Natural killer cell (primary cell): ENCODE measurements at regions of chr19 and their contacts with region 1.

Region 1: GRCh38 chr19:42450314-42450934 is 7.7 kb upstream of the CXCL17 start:
- DNase-seq: peak; percentile 65 to 97
- ATAC-seq: peak; percentile 95 to 98 (median 97)
- H3K4me3 ChIP-seq: no peak overlapping the region
- H3K4me3 Mint-ChIP-seq: no peak overlapping the region
- H3K27ac ChIP-seq: peak overlapping the region; percentile 82
- H3K27ac Mint-ChIP-seq: no peak overlapping the region
- H3K4me1 ChIP-seq: peaks cover 12% of the 10 kb centered on the region
- H3K4me1 Mint-ChIP-seq: peaks cover 5 to 6% of the 10 kb centered on the region in 2 donors
- H3K27me3 ChIP-seq: no peaks in the 10 kb centered on the region
- H3K27me3 Mint-ChIP-seq: peaks cover 6 to 10% of the 10 kb centered on the region in 2 donors
- CTCF ChIP-seq: peak; percentile 83

Region 2: GRCh38 chr19:42465827-42466280 is 15.4 kb after region 1 on chr19:
- intact Hi-C with region 1: no loop called
- DNase-seq: no peak
- ATAC-seq: no peak
- H3K4me3 ChIP-seq: no peak overlapping the region
- H3K4me3 Mint-ChIP-seq: no peak overlapping the region
- H3K27ac ChIP-seq: peak overlapping the region; percentile 8
- H3K27ac Mint-ChIP-seq: no peak overlapping the region
- H3K4me1 ChIP-seq: peaks cover 19% of the 10 kb centered on the region
- H3K4me1 Mint-ChIP-seq: peaks cover 0 to 10% of the 10 kb centered on the region in 2 donors
- H3K27me3 ChIP-seq: no peaks in the 10 kb centered on the region
- H3K27me3 Mint-ChIP-seq: peaks cover 0 to 4% of the 10 kb centered on the region in 2 donors
- CTCF ChIP-seq: no peak

Region 3: GRCh38 chr19:42529248-42529764 is 78.9 kb after region 1 on chr19:
- intact Hi-C with region 1: loop called (anchors 1 kb)
- DNase-seq: peak; percentile 56 to 85
- ATAC-seq: peak; percentile 78 to 95 (median 94)
- H3K4me3 ChIP-seq: no peak overlapping the region
- H3K4me3 Mint-ChIP-seq: no peak overlapping the region
- H3K27ac ChIP-seq: no peak overlapping the region
- H3K27ac Mint-ChIP-seq: peak overlapping the region in 1 of 2 donors; percentile 78
- H3K4me1 ChIP-seq: peaks cover 14% of the 10 kb centered on the region
- H3K4me1 Mint-ChIP-seq: peaks cover 6 to 17% of the 10 kb centered on the region in 2 donors
- H3K27me3 ChIP-seq: no peaks in the 10 kb centered on the region
- H3K27me3 Mint-ChIP-seq: no peaks in the 10 kb centered on the region
- CTCF ChIP-seq: peak; percentile 86

Region 4: DNA sequence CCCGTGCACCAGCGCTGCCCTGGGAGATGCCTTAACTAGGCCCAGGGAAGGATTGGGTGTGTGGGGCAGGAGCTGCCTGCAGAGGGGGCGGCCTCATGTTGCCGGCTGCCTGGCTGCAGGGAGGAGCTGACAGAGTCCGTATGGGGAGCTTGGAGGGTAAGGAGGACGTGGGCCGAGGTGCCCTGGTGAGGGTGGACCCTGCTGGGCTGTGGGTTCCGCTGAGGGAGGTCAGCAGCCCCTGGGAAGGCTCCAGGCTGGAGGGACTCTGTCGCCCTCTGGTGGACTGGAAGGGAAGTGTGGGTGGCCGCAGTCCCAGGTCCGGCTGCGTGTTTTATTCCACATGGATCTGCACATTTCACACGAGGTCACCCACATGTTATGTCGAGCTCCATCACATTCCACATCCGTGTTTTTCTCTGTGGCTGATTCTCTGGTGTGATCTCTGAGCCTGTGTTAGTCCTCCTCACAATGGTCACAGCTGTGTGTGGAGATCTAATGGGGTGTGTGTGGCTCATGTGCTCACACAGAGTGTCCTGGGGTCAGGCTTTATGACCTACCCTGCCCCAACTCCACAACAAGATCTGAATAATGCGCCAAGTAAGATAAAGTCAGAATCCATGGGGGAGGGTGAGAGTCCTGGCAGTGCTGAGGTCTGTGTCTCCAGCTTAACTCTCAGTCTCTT is 146.1 kb after region 1 on chr19:
- intact Hi-C with region 1: loop called (anchors 2 kb)
- DNase-seq: peak in 1 of 2 donors; percentile 65
- ATAC-seq: peak in 2 of 3 donors; percentile 64 to 69
- H3K4me3 ChIP-seq: no peak overlapping the region
- H3K4me3 Mint-ChIP-seq: no peak overlapping the region
- H3K27ac ChIP-seq: no peak overlapping the region
- H3K27ac Mint-ChIP-seq: no peak overlapping the region
- H3K4me1 ChIP-seq: no peaks in the 10 kb centered on the region
- H3K4me1 Mint-ChIP-seq: peaks cover 0 to 8% of the 10 kb centered on the region in 2 donors
- H3K27me3 ChIP-seq: no peaks in the 10 kb centered on the region
- H3K27me3 Mint-ChIP-seq: peaks cover 15 to 22% of the 10 kb centered on the region in 2 donors
- CTCF ChIP-seq: peak; percentile 95